IMR-90 (cell line): ENCODE measurements at regions of chr18 and their contacts with region 1.

Region 1: GRCh38 chr18:43661570-43661969 is 384.3 kb upstream of the SYT4 start:
- DNase-seq: peak; percentile 83
- ATAC-seq: 0 out of 2 replicates have a peak, but pooled peaks have one; percentile 13
- H3K4me3 ChIP-seq: no peak overlapping the region
- H3K27ac ChIP-seq: peak overlapping the region; percentile 45; the same call in 1 of the 2 replicates
- H3K4me1 ChIP-seq: peaks cover 6% of the 10 kb centered on the region
- H3K27me3 ChIP-seq: no peaks in the 10 kb centered on the region
- CTCF ChIP-seq: peak; percentile 59
- POLR2A ChIP-seq: no peak
- RAD21 ChIP-seq: peak; percentile 75

Region 2: DNA sequence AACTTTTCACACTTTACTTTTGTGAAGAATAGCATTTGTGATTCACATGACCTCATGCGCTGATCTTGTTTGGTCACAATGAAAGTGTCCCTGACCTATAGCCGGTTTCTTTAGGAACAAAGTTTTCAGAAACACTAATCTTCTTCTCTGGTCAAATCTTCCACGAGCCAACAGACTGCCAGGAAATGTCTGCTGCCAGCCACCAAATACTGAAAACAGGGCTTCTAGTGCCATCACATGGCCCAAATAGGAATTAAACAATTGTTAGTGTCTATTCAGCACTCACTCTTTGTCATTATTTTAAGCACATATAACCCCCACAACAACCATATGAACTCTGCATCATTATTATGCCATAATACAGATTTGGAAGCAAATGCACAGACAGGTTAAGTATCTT is 97.8 kb before region 1 on chr18:
- CTCF ChIA-PET with region 1: no interaction called
- POLR2A ChIA-PET with region 1: no interaction called
- dilution Hi-C with region 1: no loop called
- in situ Hi-C with region 1: no loop called
- intact Hi-C with region 1: no loop called
- DNase-seq: peak; percentile 6
- ATAC-seq: peak; percentile 72
- H3K4me3 ChIP-seq: no peak overlapping the region
- H3K27ac ChIP-seq: no peak overlapping the region
- H3K4me1 ChIP-seq: no peaks in the 10 kb centered on the region
- H3K27me3 ChIP-seq: no peaks in the 10 kb centered on the region
- CTCF ChIP-seq: peak; percentile 32
- POLR2A ChIP-seq: no peak
- RAD21 ChIP-seq: peak; percentile 52

Region 3: GRCh38 chr18:43634994-43635393 is 26.6 kb before region 1 on chr18:
- CTCF ChIA-PET with region 1: no interaction called
- POLR2A ChIA-PET with region 1: no interaction called
- dilution Hi-C with region 1: no loop called
- in situ Hi-C with region 1: no loop called
- intact Hi-C with region 1: no loop called
- DNase-seq: no peak
- ATAC-seq: no peak
- H3K4me3 ChIP-seq: no peak overlapping the region
- H3K27ac ChIP-seq: no peak overlapping the region
- H3K4me1 ChIP-seq: no peaks in the 10 kb centered on the region
- H3K27me3 ChIP-seq: no peaks in the 10 kb centered on the region
- CTCF ChIP-seq: no peak
- POLR2A ChIP-seq: no peak
- RAD21 ChIP-seq: no peak

Region 4: GRCh38 chr18:43934781-43935471 is 273.4 kb after region 1 on chr18:
- CTCF ChIA-PET with region 1: no interaction called
- POLR2A ChIA-PET with region 1: no interaction called
- dilution Hi-C with region 1: no loop called
- in situ Hi-C with region 1: no loop called
- intact Hi-C with region 1: loop called (anchors 10 kb)
- DNase-seq: peak; percentile 74
- ATAC-seq: peak; percentile 70
- H3K4me3 ChIP-seq: no peak overlapping the region
- H3K27ac ChIP-seq: peak overlapping the region; percentile 25; the same call in 1 of the 2 replicates
- H3K4me1 ChIP-seq: peaks cover 5% of the 10 kb centered on the region; the same call in 1 of the 2 replicates
- H3K27me3 ChIP-seq: no peaks in the 10 kb centered on the region
- CTCF ChIP-seq: no peak
- POLR2A ChIP-seq: no peak
- RAD21 ChIP-seq: no peak

Region 5: DNA sequence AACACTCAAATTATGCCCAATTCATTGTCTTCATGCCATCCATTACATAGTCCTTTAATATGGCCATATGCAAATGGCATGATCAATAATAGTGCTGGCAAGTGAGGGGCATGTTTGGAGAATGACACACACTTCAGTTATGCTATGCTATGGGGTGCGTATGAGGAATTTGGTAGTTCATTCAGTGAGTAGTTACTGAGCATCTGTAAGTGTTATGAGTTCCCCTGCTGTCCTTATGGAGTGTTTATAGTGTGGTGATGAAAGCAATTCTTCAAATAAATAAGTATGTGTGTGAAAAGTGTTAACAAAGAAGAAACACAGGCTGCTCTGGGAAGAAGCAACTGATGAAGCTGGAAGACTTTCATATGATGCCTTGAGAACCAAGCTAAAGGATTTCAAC is 1570.0 kb after region 1 on chr18:
- CTCF ChIA-PET with region 1: no interaction called
- POLR2A ChIA-PET with region 1: no interaction called
- dilution Hi-C with region 1: no loop called
- in situ Hi-C with region 1: no loop called
- intact Hi-C with region 1: loop called (anchors 10 kb)
- DNase-seq: peak; percentile 52
- ATAC-seq: peak; percentile 91
- H3K4me3 ChIP-seq: no peak overlapping the region
- H3K27ac ChIP-seq: peak overlapping the region; percentile 66; the same call in 1 of the 2 replicates
- H3K4me1 ChIP-seq: peaks cover 12% of the 10 kb centered on the region
- H3K27me3 ChIP-seq: peaks cover 6% of the 10 kb centered on the region; the same call in 1 of the 2 replicates
- CTCF ChIP-seq: no peak
- POLR2A ChIP-seq: no peak
- RAD21 ChIP-seq: no peak

Region 6: GRCh38 chr18:45482286-45482685 is 1820.7 kb after region 1 on chr18:
- CTCF ChIA-PET with region 1: no interaction called
- POLR2A ChIA-PET with region 1: no interaction called
- dilution Hi-C with region 1: no loop called
- in situ Hi-C with region 1: no loop called
- intact Hi-C with region 1: no loop called
- DNase-seq: no peak
- ATAC-seq: no peak
- H3K4me3 ChIP-seq: no peak overlapping the region
- H3K27ac ChIP-seq: no peak overlapping the region
- H3K4me1 ChIP-seq: no peaks in the 10 kb centered on the region
- H3K27me3 ChIP-seq: no peaks in the 10 kb centered on the region; the same call in 1 of the 2 replicates
- CTCF ChIP-seq: no peak
- POLR2A ChIP-seq: no peak
- RAD21 ChIP-seq: no peak